Activated T-helper 1 cell treated with anti-CD3 and anti-CD28 coated beads, Interleukin-12 subunit alpha, Interleukin-12 subunit beta, Interleukin-2, Interleukin-4 antibody, amounts not matched to agents 30 ng/mL and 10 ng/mL and 1 ng/mL, durations not matched to agents 14 hours and 24 hours and 36 hours (primary cell): ENCODE measurements at regions of chr10 and their contacts with region 1.

Region 1: DNA sequence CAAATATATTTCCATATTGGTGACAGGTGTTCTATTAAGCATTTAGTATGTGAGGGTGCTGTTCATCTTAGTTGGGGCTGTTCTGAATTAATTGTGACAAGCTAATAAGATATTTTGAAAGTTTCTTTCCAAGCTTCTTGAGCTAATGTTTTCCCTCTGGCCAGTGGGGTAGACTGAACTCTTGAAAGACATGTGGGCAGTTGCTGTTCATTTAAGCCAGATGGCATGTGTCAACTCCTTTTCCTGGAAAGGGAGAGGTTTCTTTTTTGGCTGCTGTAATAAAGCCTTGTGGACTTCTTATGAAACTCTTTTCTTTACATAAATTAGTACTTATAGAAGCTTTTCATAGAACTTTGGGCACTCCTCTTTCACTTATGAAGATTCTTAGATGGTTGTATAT is 21.7 kb downstream of the RAB18 start:
- DNase-seq: no peak
- H3K4me3 Mint-ChIP-seq: no peak overlapping the region
- H3K27ac Mint-ChIP-seq: no peak overlapping the region
- H3K4me1 Mint-ChIP-seq: peaks cover 81% of the 10 kb centered on the region
- H3K27me3 Mint-ChIP-seq: no peaks in the 10 kb centered on the region

Region 2: GRCh38 chr10:27513451-27514191 is 12.2 kb before region 1 on chr10:
- intact Hi-C with region 1: loop called (anchors 2 kb)
- DNase-seq: peak; percentile 23
- H3K4me3 Mint-ChIP-seq: peak overlapping the region; percentile 80
- H3K27ac Mint-ChIP-seq: peak overlapping the region; percentile 91
- H3K4me1 Mint-ChIP-seq: peaks cover 52% of the 10 kb centered on the region
- H3K27me3 Mint-ChIP-seq: no peaks in the 10 kb centered on the region